ENCODE measurements at regions of chr2 and their contacts with region 1.

Region 1: DNA sequence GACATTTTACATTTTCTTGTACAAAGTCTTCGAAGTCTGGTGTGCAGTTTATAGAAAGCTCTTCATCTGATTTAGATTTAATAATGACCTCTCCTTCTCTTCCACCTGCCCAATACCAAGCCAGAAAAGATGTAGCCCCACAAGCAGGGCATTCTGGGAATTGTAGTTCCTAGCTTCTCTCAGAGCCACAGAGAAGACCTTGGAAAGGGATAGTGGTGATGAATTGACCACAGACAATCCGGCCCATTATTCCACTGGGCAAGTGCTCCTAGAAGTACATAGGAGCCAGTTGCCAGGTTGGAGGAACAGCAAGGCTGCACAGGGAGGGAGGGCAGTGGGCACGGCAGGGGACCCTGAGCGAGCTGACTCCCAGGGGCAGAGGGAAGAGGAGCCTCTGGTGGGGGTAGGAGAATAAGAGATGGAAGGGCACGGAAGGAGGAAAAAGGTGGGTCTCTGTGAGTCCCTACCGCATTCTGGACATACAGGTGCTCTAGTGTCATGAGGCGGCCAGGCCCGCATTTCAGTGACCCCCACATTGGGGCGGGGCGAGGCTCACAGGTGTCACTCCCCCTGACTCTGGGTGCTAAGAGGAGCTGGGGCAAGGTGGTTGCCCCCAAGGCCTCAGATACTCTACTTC is 152.5 kb upstream of the HAAO start:
- DNase-seq: no peak
- ATAC-seq: no peak
- H3K4me3 ChIP-seq: no peak overlapping the region
- H3K4me3 Mint-ChIP-seq: no peak overlapping the region
- H3K27ac ChIP-seq: no peak overlapping the region
- H3K27ac Mint-ChIP-seq: no peak overlapping the region
- H3K4me1 ChIP-seq: no peaks in the 10 kb centered on the region
- H3K4me1 Mint-ChIP-seq: peaks cover 0 to 7% (median 5%) of the 10 kb centered on the region in 7 donors
- H3K27me3 ChIP-seq: no peaks in the 10 kb centered on the region
- H3K27me3 Mint-ChIP-seq: peaks cover 0 to 8% (median 0%) of the 10 kb centered on the region in 5 donors

Region 2: DNA sequence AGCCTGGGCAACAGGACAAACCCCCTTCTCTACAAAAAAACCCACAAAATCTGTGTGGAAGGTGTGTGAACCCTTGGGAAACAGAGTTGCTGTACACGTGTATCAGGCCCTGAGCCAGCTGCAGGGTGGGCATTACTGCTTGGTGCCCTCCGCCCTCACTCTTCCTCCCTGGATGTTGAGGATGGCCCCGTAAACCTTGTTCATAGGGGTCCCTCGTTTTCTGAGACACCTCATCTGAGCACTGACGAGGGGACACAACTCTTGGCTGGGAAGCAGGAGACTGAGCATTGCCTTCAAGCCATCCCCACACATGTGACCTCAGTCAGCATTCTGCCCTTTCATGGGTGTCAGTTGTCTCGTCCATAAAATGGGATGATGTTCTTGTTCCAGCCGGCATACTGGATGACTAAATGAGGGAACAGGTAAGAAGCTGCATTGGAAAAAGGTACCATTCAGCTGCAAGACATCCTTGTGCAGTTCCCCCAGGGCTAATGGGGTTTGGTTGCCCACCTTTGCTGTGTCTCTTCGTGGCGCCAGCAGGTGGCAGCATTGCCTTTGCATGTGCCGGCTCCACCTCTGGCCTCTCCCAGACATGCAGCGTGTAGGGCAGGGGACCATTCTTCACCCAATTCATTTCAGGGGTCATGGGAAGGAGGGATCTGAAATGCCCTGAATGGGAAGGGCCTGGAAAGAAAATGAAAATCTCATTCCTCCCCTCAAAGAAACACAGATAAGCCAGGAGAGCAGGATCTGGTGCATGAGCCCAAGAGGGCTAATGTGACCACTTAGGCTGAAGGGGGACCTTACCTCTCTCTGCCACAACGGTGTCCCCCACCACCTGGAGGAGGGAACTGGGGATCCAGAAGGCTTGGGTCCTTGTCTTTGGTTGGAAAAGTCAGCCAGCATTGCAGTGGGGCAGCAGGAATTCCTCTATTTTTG is 116.1 kb before region 1 on chr2:
- CTCF ChIA-PET with region 1: no interaction called
- POLR2A ChIA-PET with region 1: no interaction called
- intact Hi-C with region 1: loop called in 1 of 2 experiments (anchors 2 kb)
- DNase-seq: peak; percentile 44 to 69 (median 63)
- ATAC-seq: peak; percentile 93
- H3K4me3 ChIP-seq: no peak overlapping the region
- H3K4me3 Mint-ChIP-seq: peak overlapping the region in 6 of 10 donors; percentile 18 to 47 (median 21)
- H3K27ac ChIP-seq: no peak overlapping the region
- H3K27ac Mint-ChIP-seq: peak overlapping the region in 2 of 9 donors; percentile 21 to 25
- H3K4me1 ChIP-seq: peaks cover 3 to 6% of the 10 kb centered on the region in 2 donors
- H3K4me1 Mint-ChIP-seq: peaks cover 7 to 19% (median 14%) of the 10 kb centered on the region in 7 donors
- H3K27me3 ChIP-seq: no peaks in the 10 kb centered on the region
- H3K27me3 Mint-ChIP-seq: peaks cover 0 to 8% (median 5%) of the 10 kb centered on the region in 5 donors

Region 3: DNA sequence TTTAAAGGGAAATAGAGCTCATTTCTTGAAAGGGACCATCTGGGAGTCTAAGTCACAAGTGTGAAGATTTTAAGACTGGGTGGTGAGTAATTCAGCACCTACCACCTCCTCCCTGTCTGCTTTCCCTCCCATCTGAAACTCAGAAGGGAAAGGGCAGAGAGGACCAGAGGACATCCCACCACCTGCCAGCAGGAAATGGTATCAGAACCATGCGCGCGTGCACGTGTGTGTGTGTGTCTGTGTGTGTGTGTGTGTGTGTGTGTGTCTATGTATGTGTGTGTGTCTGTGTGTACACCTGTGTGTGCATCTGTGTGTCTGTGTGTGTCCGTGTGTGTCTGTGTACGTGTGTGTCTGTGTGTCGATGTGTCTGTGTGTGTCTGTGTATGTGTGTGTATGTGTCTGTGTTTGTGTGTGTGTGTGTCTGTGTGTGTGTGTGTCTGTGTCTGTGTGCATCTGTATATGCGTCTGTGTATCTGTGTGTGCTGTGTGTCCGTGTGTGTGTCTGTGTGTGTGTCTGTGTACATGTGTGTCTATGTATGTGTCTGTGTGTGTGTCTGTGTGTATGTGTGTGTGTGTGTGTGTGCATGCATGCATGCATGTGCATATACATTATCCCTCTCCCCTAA is 204.7 kb after region 1 on chr2:
- CTCF ChIA-PET with region 1: no interaction called
- POLR2A ChIA-PET with region 1: no interaction called
- intact Hi-C with region 1: no loop called
- DNase-seq: peak in 1 of 9 donors; percentile 64
- ATAC-seq: peak; percentile 51
- H3K4me3 ChIP-seq: no peak overlapping the region
- H3K4me3 Mint-ChIP-seq: peak overlapping the region; percentile 28 to 69 (median 58)
- H3K27ac ChIP-seq: peak overlapping the region; percentile 36
- H3K27ac Mint-ChIP-seq: peak overlapping the region; percentile 82 to 96 (median 88)
- H3K4me1 ChIP-seq: peaks cover 15 to 54% of the 10 kb centered on the region in 2 donors
- H3K4me1 Mint-ChIP-seq: peaks cover 43 to 92% (median 67%) of the 10 kb centered on the region in 7 donors
- H3K27me3 ChIP-seq: no peaks in the 10 kb centered on the region
- H3K27me3 Mint-ChIP-seq: no peaks in the 10 kb centered on the region

Region 4: GRCh38 chr2:43542285-43542937 is 597.5 kb after region 1 on chr2:
- CTCF ChIA-PET with region 1: interaction called, 27 read pairs
- POLR2A ChIA-PET with region 1: no interaction called
- intact Hi-C with region 1: loop called (anchors 1 kb)
- DNase-seq: peak in 7 of 9 donors; percentile 43 to 70 (median 48)
- ATAC-seq: peak; percentile 82
- H3K4me3 ChIP-seq: no peak overlapping the region
- H3K4me3 Mint-ChIP-seq: no peak overlapping the region
- H3K27ac ChIP-seq: no peak overlapping the region
- H3K27ac Mint-ChIP-seq: no peak overlapping the region
- H3K4me1 ChIP-seq: peaks cover 0 to 3% of the 10 kb centered on the region in 2 donors
- H3K4me1 Mint-ChIP-seq: peaks cover 9 to 18% (median 15%) of the 10 kb centered on the region in 7 donors
- H3K27me3 ChIP-seq: no peaks in the 10 kb centered on the region
- H3K27me3 Mint-ChIP-seq: no peaks in the 10 kb centered on the region

Region 5: DNA sequence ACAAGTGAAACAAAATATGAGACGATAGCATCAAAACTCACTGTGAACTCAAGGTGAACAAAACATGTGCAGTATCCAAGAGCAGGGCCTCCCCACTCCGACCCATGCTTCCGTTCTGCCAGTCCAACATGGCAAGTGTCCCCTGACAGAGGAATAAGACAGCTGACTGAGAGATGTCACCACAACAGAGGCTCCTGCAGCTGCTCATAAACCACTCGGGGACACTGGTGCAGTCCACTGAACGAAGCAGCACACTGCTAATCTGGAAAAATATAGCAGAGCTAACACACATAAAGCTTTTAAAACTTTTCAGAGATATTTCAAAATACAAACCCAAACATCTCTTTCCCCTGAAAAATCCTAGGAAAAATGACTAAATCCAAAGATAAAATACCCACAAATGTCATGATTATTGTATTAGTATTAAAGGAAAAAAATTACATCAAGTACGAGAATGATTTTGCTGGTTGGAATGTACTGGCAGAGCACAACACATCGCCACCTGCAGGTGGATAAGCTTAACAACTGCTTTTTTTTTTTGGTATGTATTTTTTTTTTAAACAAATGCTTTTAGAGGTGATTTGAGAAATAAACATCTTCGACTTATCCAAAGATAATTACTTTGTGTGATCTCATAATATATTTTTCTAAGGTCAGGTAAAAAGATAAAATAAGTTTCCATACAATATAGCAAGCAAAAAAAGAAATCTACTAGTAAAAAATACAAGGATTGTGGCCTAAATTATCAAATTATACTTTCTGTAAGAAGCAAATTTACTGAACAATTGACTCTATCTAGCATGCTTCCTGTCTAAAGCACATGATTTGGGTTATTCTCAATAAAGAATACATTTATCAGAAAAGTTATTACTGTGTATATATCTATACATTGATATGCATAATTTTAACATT is 632.3 kb after region 1 on chr2:
- CTCF ChIA-PET with region 1: interaction called, 16 read pairs
- POLR2A ChIA-PET with region 1: no interaction called
- intact Hi-C with region 1: loop called (anchors 1 kb)
- DNase-seq: peak in 7 of 9 donors; percentile 15 to 54 (median 44)
- ATAC-seq: peak; percentile 70
- H3K4me3 ChIP-seq: no peak overlapping the region
- H3K4me3 Mint-ChIP-seq: no peak overlapping the region
- H3K27ac ChIP-seq: no peak overlapping the region
- H3K27ac Mint-ChIP-seq: no peak overlapping the region
- H3K4me1 ChIP-seq: no peaks in the 10 kb centered on the region
- H3K4me1 Mint-ChIP-seq: peaks cover 0 to 12% (median 6%) of the 10 kb centered on the region in 7 donors
- H3K27me3 ChIP-seq: no peaks in the 10 kb centered on the region
- H3K27me3 Mint-ChIP-seq: no peaks in the 10 kb centered on the region

Measured in naive thymus-derived CD4-positive, alpha-beta T cell (primary cell).